Activated CD4-positive, alpha-beta T cell treated with anti-CD3 and anti-CD28 coated beads for 36 hours (primary cell): ENCODE measurements at regions of chr9 and their contacts with region 1.

Region 1: DNA sequence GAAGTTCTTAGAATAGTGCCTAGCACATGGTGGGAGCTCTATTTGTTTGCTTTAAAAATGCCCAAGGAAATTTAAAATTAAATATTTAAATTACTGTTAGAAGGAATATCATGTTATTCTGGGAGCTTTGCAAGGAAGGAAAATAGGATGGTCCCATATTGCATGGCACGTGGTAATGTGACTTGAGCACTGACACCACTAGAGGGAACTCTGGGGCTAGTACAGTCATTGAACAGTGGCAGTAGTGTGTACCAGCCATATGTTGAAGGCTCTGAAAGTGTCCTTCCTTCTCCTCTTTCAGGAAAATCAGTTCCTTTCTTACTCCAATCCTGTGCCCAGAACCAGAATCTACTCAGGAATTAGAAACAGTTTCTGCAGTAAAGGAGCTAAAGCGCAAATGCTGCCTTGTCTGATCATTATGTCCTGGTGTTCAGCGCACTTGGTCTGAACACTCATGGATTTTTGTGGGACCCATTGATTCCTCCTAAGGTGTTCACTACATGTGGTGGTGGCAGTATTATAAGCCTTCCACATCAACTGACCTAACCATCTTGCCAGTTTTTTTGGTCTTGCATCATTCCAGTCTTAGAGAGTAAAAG is 54.1 kb downstream of the GDA start:
- DNase-seq: peak; percentile 8
- ATAC-seq: peak; percentile 66
- H3K4me3 Mint-ChIP-seq: no peak overlapping the region
- H3K27ac Mint-ChIP-seq: no peak overlapping the region
- H3K4me1 Mint-ChIP-seq: no peaks in the 10 kb centered on the region
- H3K27me3 Mint-ChIP-seq: peaks cover 2% of the 10 kb centered on the region

Region 2: GRCh38 chr9:71748280-71748743 is 455.0 kb before region 1 on chr9:
- CTCF ChIA-PET with region 1: no interaction called
- POLR2A ChIA-PET with region 1: no interaction called
- intact Hi-C with region 1: no loop called
- DNase-seq: no peak
- ATAC-seq: peak; percentile 70
- H3K4me3 Mint-ChIP-seq: no peak overlapping the region
- H3K27ac Mint-ChIP-seq: no peak overlapping the region
- H3K4me1 Mint-ChIP-seq: peaks cover 27% of the 10 kb centered on the region
- H3K27me3 Mint-ChIP-seq: no peaks in the 10 kb centered on the region

Region 3: DNA sequence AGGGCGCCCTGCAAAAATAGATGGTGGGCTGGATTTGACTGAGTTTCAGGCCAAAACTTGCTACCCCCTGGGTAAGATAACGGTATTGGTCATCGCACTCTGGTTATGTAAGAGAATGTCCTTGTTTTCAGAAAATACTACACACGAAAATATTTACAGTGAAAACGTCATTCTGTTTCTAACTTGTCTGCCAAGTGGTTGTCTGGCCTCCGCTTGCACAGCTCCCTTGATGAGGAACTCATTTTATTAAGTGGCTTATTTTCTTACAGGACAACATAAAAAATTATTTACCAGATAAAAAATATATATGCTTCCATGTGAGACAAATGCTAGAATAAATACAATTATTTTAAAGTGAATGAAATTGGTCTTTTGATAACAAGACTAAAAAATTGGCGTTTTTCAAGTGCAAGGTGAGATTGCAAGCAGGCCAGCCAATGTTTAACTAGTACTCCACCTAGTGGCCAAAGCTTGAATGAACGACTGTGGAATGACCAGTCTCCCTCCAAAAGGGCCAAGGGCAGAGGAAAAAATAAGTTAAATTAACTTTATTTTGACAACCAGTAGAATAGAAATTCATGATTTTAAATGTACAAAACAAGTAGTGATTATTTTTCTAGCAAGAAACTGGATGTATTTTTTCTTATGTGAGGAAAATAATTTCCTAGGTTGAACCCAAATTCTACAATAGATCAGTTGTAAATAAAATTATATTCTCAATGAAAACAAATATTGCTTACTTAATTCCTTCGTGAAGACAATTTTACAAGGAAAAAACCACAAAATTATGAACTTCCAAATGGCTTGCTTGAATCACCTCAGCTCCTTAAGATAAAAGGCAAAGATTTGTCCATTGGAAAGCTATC is 68.5 kb after region 1 on chr9:
- CTCF ChIA-PET with region 1: interaction called, 10 read pairs
- POLR2A ChIA-PET with region 1: no interaction called
- intact Hi-C with region 1: loop called in 1 of 2 experiments (anchors 1 kb)
- DNase-seq: peak; percentile 66
- ATAC-seq: no peak
- H3K4me3 Mint-ChIP-seq: no peak overlapping the region
- H3K27ac Mint-ChIP-seq: no peak overlapping the region
- H3K4me1 Mint-ChIP-seq: no peaks in the 10 kb centered on the region
- H3K27me3 Mint-ChIP-seq: no peaks in the 10 kb centered on the region